ENCODE measurements at regions of chr5 and their contacts with region 1.

Region 1: GRCh38 chr5:151659001-151659754 is 27.5 kb downstream of the SPARC start:
- DNase-seq: peak; percentile 86 to 93 (median 88)
- H3K4me3 ChIP-seq: no peak overlapping the region
- H3K27ac ChIP-seq: no peak overlapping the region
- H3K4me1 ChIP-seq: peaks cover 0 to 15% (median 0%) of the 10 kb centered on the region in 3 donors
- H3K27me3 ChIP-seq: no peaks in the 10 kb centered on the region
- CTCF ChIP-seq: peak; percentile 91

Region 2: DNA sequence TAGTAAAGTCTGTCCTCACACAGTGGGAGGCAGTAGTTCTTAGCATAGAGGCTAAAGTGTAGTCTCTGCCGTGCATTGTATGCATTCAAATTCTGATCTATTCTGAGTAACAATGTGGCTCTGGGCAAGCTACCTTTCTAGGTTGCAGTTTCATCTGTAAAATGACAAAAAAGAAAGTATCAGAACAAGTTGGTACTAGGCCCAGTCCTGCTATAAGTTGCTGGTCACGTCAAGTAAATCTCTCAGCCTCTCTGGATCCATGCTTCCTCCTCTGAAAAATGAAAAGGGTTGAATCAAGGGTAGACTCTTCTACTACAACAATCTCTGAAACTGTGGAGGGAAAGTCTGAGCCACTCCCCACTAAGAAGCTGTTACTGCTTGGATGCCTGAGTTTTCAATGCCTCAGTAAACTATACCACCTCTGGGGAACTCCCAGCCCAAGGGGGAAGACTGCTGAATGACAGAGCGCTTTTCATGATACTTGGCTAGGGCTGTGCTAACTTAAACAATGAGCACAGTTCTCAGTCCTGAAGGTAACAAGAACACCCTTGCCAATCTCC is 62.0 kb after region 1 on chr5:
- intact Hi-C with region 1: loop called (anchors 5 kb)
- DNase-seq: no peak
- H3K4me3 ChIP-seq: no peak overlapping the region
- H3K27ac ChIP-seq: no peak overlapping the region
- H3K4me1 ChIP-seq: no peaks in the 10 kb centered on the region
- H3K27me3 ChIP-seq: no peaks in the 10 kb centered on the region
- CTCF ChIP-seq: no peak

Region 3: DNA sequence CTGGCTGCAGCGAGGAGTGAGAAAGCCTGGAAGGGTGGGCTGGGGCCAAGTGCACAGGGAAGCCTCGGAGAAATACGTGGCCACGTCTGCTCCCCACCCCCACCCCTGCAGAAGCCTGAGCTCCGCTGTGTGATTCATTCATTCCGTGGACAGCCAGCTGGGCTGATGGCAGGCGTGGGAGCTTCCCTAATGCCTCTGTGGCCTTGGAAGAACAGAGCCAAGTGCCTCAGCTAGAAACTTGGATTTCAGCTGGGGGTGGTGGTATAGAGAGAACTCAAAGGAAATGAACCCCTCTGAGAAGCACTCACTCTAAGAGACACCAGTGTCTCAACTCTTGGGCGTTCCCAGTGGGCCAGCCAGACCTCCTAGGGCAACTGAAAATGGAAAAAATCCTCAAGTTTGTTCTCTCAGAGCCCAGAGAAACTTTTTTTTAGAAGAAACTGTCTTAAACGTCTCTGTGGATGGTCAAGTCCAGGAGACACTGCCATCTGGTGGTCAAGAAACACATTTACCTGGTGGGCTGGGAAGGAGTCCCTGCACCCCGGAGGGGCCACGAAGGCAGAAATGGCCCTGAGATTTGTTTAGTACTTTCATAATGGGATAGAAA is 81.3 kb after region 1 on chr5:
- intact Hi-C with region 1: loop called (anchors 5 kb)
- DNase-seq: peak; percentile 76 to 90 (median 85)
- H3K4me3 ChIP-seq: no peak overlapping the region
- H3K27ac ChIP-seq: peak overlapping the region; percentile 20 to 62
- H3K4me1 ChIP-seq: peaks cover 0 to 5% (median 2%) of the 10 kb centered on the region in 3 donors
- H3K27me3 ChIP-seq: no peaks in the 10 kb centered on the region
- CTCF ChIP-seq: peak; percentile 76

Region 4: GRCh38 chr5:151947925-151948608 is 288.9 kb after region 1 on chr5:
- intact Hi-C with region 1: no loop called
- DNase-seq: peak in 1 of 5 donors; percentile 3
- H3K4me3 ChIP-seq: no peak overlapping the region
- H3K27ac ChIP-seq: no peak overlapping the region
- H3K4me1 ChIP-seq: no peaks in the 10 kb centered on the region
- H3K27me3 ChIP-seq: no peaks in the 10 kb centered on the region
- CTCF ChIP-seq: no peak